B cell (primary cell): ENCODE measurements at regions of chr6 and their contacts with region 1.

Region 1: DNA sequence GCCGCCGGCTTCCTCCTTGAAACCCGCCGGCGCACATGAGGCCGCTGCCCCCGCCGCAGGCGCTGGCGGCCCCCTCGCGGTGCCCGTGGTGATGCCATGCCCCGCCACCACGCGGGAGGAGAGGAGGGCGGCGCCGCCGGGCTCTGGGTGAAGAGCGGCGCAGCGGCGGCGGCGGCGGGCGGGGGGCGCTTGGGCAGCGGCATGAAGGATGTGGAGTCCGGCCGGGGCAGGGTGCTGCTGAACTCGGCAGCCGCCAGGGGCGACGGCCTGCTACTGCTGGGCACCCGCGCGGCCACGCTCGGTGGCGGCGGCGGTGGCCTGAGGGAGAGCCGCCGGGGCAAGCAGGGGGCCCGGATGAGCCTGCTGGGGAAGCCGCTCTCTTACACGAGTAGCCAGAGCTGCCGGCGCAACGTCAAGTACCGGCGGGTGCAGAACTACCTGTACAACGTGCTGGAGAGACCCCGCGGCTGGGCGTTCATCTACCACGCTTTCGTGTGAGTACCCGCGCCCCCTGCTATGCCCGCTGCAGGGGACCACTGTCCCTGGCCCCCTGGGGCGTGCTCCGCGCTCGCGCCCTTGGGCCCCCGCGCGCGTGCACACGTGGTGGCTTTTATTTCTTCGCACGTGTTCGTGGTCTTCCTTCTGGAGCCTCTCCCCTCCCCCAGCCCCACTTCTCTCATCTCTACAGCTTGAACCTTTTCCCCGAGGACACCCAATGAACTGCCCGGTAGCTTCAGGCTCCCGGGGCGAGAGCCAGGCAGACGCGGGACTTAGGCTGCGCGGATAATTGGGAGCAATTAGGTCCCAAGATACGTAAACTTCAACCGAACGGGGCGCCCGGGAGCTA is 453 bp downstream of the KCNQ5 start:
- DNase-seq: peak; percentile 85
- ATAC-seq: peak; percentile 60
- H3K4me3 ChIP-seq: peak overlapping the region; percentile 65 to 89 (median 69)
- H3K4me3 Mint-ChIP-seq: peak overlapping the region; percentile 96
- H3K27ac ChIP-seq: peak overlapping the region; percentile 45 to 67
- H3K27ac Mint-ChIP-seq: peak overlapping the region; percentile 89
- H3K4me1 ChIP-seq: peaks cover 33 to 34% of the 10 kb centered on the region in 2 donors
- H3K4me1 Mint-ChIP-seq: peaks cover 50% of the 10 kb centered on the region
- H3K27me3 ChIP-seq: no peaks in the 10 kb centered on the region
- H3K27me3 Mint-ChIP-seq: no peaks in the 10 kb centered on the region
- CTCF ChIP-seq: peak; percentile 35

Region 2: DNA sequence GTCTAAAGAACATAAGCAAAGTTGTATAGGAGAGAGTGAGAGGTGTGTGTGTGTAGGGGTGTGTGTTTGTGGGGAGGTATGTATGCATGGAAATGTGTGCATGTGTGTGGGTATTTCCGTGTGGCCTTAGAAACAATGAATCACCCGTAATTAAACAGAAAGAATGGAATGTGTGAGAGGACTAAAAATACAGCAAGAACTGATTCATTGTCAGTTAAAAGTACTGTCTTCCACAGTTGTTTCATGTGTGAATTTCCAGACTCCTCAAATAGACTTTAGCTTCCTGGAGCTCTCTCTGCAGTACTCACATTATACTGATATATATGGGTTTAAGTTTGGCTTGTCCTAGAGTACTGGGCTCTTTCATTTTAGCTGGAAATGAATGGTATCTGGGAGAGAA is 590.2 kb before region 1 on chr6:
- CTCF ChIA-PET with region 1: no interaction called
- POLR2A ChIA-PET with region 1: no interaction called
- intact Hi-C with region 1: no loop called
- DNase-seq: no peak
- ATAC-seq: no peak
- H3K4me3 ChIP-seq: no peak overlapping the region
- H3K4me3 Mint-ChIP-seq: no peak overlapping the region
- H3K27ac ChIP-seq: no peak overlapping the region
- H3K27ac Mint-ChIP-seq: no peak overlapping the region
- H3K4me1 ChIP-seq: no peaks in the 10 kb centered on the region
- H3K4me1 Mint-ChIP-seq: no peaks in the 10 kb centered on the region
- H3K27me3 ChIP-seq: no peaks in the 10 kb centered on the region
- H3K27me3 Mint-ChIP-seq: no peaks in the 10 kb centered on the region
- CTCF ChIP-seq: no peak

Region 3: DNA sequence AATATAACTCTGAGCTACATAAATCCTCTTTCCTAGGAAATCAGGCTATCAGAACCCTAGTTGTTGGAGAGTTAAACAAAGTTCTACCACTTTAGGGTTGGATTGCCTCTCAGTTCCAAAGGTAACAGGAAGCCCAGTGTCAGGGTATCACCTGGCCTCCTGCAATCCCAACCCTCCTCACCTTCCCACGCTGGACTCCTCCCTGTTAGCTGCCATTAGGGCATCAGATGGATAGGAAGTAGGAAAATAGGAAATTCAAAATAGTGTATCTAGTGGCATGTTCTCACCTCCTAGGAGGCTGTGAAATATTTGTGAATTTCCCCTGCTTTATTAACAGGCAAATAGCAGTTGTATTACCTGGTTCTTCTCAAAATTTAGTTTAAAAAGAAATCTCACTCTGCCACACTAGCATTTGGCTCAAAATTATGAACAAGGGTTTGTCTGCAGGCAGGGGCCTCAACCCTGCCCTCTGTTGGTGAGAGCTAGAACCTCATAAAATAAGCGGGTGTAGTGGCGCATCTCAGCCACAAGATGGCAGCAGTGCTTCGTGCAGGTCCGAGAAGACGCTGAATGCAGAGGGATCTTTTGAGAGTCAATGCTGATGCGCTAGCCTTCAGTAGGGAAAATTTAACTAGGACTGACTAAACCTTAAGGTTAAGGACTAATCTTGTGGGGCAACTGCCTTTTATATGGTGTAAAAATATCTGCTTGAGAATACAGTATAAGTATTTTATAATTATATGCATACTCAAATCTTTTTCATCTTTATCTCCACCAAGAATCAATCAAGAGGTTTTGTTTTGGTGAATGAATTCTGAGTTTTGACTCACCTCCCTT is 210.2 kb before region 1 on chr6:
- CTCF ChIA-PET with region 1: interaction called, 21 read pairs
- POLR2A ChIA-PET with region 1: no interaction called
- intact Hi-C with region 1: loop called (anchors 2 kb)
- DNase-seq: peak; percentile 91
- ATAC-seq: peak; percentile 100
- H3K4me3 ChIP-seq: no peak overlapping the region
- H3K4me3 Mint-ChIP-seq: no peak overlapping the region
- H3K27ac ChIP-seq: no peak overlapping the region
- H3K27ac Mint-ChIP-seq: no peak overlapping the region
- H3K4me1 ChIP-seq: no peaks in the 10 kb centered on the region
- H3K4me1 Mint-ChIP-seq: peaks cover 5% of the 10 kb centered on the region
- H3K27me3 ChIP-seq: peaks cover 0 to 3% (median 1%) of the 10 kb centered on the region in 4 experiments
- H3K27me3 Mint-ChIP-seq: peaks cover 17% of the 10 kb centered on the region
- CTCF ChIP-seq: peak; percentile 100

Region 4: GRCh38 chr6:72689107-72689954 is 67.0 kb after region 1 on chr6:
- CTCF ChIA-PET with region 1: interaction called, 20 read pairs
- POLR2A ChIA-PET with region 1: interaction called, 3 read pairs
- intact Hi-C with region 1: loop called (anchors 1 kb)
- DNase-seq: peak; percentile 59
- ATAC-seq: peak; percentile 96
- H3K4me3 ChIP-seq: peak overlapping the region in 3 of 5 experiments; percentile 5 to 32 (median 20)
- H3K4me3 Mint-ChIP-seq: peak overlapping the region; percentile 83
- H3K27ac ChIP-seq: peak overlapping the region; percentile 38 to 53
- H3K27ac Mint-ChIP-seq: peak overlapping the region; percentile 87
- H3K4me1 ChIP-seq: peaks cover 6 to 8% of the 10 kb centered on the region in 2 donors
- H3K4me1 Mint-ChIP-seq: peaks cover 15% of the 10 kb centered on the region
- H3K27me3 ChIP-seq: no peaks in the 10 kb centered on the region
- H3K27me3 Mint-ChIP-seq: no peaks in the 10 kb centered on the region
- CTCF ChIP-seq: no peak

Region 5: DNA sequence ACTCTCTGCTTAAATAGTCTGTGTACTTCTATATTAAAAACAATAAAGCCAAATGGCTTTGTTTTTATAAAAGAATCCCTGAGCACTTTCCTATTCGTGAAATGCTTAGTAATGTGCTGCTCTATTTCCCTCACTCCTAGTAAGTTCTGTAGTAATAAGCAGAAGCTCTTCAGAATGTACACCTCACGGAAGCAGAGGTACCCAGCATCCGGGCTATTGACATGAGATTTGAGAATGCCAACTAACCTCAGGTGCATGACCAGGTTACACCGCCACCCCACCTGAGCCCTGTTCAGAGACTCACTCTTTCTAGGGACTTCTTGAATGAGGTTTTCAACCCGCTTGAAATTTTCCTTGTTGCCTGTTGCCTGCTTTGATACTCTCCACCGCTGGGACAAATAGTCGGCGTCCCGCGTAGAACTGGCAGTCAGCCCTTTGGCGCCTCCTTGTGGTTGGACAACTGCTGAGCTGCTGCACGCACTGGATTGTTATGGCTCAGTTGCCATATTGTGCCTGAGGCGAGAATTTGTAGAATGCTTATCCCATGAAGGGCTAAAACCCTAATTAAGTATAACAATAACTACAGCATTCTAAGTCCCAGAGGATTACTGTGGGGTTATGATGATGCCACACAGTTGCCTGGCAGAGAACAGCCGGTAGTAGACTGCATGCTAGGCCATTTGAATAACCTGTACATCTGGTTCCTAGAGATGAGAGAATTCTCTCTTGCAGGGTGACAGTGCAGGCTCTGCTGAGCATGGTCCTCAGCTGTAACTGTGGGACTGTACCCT is 507.5 kb after region 1 on chr6:
- CTCF ChIA-PET with region 1: interaction called, 586 read pairs
- POLR2A ChIA-PET with region 1: interaction called, 3 read pairs
- intact Hi-C with region 1: loop called (anchors 1 kb)
- DNase-seq: peak; percentile 82
- ATAC-seq: peak; percentile 93
- H3K4me3 ChIP-seq: peak overlapping the region in 3 of 5 experiments; percentile 3 to 36 (median 25)
- H3K4me3 Mint-ChIP-seq: peak overlapping the region; percentile 61
- H3K27ac ChIP-seq: no peak overlapping the region
- H3K27ac Mint-ChIP-seq: no peak overlapping the region
- H3K4me1 ChIP-seq: peaks cover 3 to 6% of the 10 kb centered on the region in 2 donors
- H3K4me1 Mint-ChIP-seq: peaks cover 7% of the 10 kb centered on the region
- H3K27me3 ChIP-seq: no peaks in the 10 kb centered on the region
- H3K27me3 Mint-ChIP-seq: no peaks in the 10 kb centered on the region
- CTCF ChIP-seq: peak; percentile 100

Region 6: DNA sequence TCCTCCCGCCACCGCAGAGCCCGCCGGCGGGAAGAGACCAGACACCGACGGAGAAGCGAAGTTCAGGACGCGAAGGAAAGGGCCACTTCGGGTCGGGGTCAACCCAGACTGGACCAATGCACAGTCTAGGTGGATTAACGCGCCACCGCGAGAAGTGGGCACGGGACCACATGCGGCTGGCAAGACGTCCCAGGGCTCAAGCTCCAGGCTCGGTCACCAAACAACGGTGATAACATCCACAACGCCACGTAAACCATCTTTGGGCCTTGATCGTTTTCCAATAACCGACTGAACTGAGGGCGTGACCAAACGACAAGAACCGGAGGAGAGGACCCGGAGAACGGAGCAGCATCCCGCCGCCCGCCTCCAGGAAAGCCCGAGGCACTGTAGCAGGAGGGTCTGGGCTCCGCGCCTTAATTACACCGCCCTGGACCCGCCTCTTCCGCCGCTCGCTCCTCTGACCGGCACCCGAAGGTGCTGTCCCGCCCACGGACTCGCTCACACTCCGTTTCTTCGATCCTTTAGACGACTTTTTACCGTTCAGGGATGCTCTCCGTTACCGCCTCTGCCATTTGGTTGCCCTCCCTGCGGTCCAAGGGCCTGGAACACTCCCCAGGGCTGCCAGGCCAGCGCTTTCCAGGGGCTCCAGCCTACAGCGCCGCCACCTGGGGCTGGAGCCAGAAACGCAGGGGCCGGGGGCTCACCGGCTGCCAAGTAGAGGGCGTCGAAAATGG is 687.6 kb after region 1 on chr6:
- CTCF ChIA-PET with region 1: no interaction called
- POLR2A ChIA-PET with region 1: no interaction called
- intact Hi-C with region 1: loop called (anchors 5 kb)
- DNase-seq: peak; percentile 69
- ATAC-seq: peak; percentile 94
- H3K4me3 ChIP-seq: peak overlapping the region; percentile 73 to 92 (median 88)
- H3K4me3 Mint-ChIP-seq: peak overlapping the region; percentile 98
- H3K27ac ChIP-seq: peak overlapping the region; percentile 39 to 65
- H3K27ac Mint-ChIP-seq: peak overlapping the region; percentile 87
- H3K4me1 ChIP-seq: peaks cover 11 to 13% of the 10 kb centered on the region in 2 donors
- H3K4me1 Mint-ChIP-seq: peaks cover 22% of the 10 kb centered on the region
- H3K27me3 ChIP-seq: peaks cover 0 to 9% (median 4%) of the 10 kb centered on the region in 4 experiments
- H3K27me3 Mint-ChIP-seq: peaks cover 10% of the 10 kb centered on the region
- CTCF ChIP-seq: peak; percentile 60

Region 7: GRCh38 chr6:73520688-73521350 is 898.5 kb after region 1 on chr6 and contains the start of gene EEF1A1:
- CTCF ChIA-PET with region 1: no interaction called
- POLR2A ChIA-PET with region 1: no interaction called
- intact Hi-C with region 1: loop called (anchors 5 kb)
- DNase-seq: peak; percentile 100
- ATAC-seq: peak; percentile 82
- H3K4me3 ChIP-seq: peak within 1 kb of the TSS; percentile 87 to 100 (median 98)
- H3K4me3 Mint-ChIP-seq: peak within 1 kb of the TSS; percentile 97
- H3K27ac ChIP-seq: peak within 1 kb of the TSS; percentile 98 to 99
- H3K27ac Mint-ChIP-seq: peak within 1 kb of the TSS; percentile 95
- H3K4me1 ChIP-seq: peaks cover 53 to 67% of the 10 kb centered on the region in 2 donors
- H3K4me1 Mint-ChIP-seq: peaks cover 66% of the 10 kb centered on the region
- H3K27me3 ChIP-seq: no peaks in the 10 kb centered on the region
- H3K27me3 Mint-ChIP-seq: no peaks in the 10 kb centered on the region
- CTCF ChIP-seq: no peak
- total RNA-seq, gene EEF1A1: 12,449 and 12,769 TPM in 2 replicates